ENCODE measurements at regions of chr2 and their contacts with region 1.

Region 1: DNA sequence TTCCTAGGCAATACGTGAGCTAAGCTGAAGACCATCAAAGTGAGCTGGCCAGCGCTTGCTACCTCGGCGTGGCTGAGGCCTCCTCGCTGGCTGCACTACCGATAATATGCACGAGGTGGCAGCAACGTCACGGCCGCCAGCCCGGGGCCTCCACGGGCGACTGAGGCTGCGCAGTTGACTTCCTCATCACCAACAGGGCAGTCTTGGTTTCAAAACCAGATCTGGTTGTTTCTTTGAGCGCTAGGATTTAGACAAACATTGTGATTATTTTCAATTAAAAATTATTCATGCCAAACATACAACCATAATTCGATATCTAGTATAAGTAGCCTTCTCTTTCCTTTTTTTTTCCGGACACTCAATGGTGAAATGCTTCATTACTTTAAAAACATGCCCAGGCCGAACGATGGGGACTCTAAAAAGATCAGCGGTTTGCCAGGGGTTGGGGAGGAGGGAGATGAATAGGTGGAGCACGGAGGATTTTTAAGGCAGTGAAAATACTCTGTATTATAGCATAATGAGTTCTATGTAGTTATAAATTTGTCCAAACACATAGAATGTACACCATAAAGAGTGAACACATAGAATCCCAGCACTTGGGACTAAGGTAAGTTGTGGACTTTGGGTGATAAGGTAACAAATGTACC is 52.0 kb downstream of the CYBRD1 start:
- DNase-seq: no peak
- H3K4me3 ChIP-seq: no peak overlapping the region
- CTCF ChIP-seq: peak; percentile 96

Region 2: DNA sequence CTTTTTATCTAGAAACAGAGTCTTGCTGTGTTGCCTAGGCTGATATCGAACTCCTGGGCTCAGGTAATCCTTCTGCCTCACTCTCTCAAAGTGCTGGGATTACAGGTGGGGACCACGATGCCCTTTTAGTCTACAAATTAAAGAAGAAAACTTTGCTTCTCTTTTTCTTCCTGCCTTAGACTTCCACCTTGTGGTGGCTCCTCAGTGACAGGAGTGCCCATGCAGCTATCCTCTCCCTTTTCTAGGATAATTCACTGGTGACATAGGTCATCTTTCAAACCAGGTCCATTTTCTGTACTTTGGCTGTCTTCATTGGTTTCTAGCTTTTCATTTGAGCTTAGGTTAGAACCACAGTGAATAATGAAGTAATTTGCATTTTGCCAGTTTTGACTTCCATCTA is 126.6 kb before region 1 on chr2:
- CTCF ChIA-PET with region 1: no interaction called
- POLR2A ChIA-PET with region 1: no interaction called
- DNase-seq: no peak
- H3K4me3 ChIP-seq: no peak overlapping the region
- CTCF ChIP-seq: no peak

Region 3: GRCh38 chr2:171587567-171587966 is 13.3 kb after region 1 on chr2:
- CTCF ChIA-PET with region 1: interaction called, 11 read pairs
- POLR2A ChIA-PET with region 1: no interaction called
- DNase-seq: no peak
- H3K4me3 ChIP-seq: no peak overlapping the region
- CTCF ChIP-seq: no peak

Region 4: DNA sequence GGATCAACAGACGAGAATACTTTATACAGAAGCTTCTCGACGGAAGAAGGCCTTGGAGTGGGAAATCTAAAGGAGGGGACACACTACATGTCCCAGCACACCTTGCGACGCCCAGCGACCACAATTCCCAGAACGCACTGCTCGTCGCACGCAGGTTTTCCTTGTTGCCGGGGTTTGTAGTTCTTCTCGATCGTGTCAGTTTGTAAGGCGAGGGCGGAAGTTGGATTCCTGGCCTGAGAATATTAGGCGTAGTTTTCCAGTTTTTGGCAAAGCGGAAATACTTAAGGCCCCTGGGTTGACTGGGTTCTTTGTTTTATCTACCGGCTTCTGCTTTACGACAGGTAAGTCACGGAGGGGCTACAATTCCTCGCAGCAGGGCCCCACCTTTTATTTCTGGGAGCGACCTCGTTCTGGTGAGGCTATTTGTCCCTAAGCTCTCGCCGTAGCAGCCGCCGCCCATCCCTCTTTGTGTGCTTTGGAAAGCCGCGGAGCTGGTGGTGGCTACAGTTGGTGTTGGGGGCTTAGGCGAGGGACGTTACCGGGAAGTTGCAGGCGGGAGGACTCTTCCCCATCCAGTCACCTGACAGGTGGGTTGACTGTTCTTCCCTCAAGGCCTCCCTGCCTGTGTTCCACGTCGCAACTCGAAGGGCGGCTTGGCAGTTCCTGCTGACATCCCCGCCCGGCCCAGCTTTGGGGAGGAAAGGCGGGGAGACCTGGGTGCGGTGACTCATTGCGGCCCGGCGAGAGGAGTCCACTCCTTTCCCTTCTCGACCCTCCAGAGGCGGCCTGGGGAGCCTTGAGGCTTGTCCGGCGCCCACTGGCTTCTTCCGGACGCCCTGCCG is 113.2 kb after region 1 on chr2 and contains the start of gene DYNC1I2:
- CTCF ChIA-PET with region 1: interaction called, 17 read pairs
- POLR2A ChIA-PET with region 1: interaction called, 3 read pairs
- DNase-seq: peak; percentile 79
- H3K4me3 ChIP-seq: peak within 1 kb of the TSS; percentile 86
- CTCF ChIP-seq: no peak

Region 5: DNA sequence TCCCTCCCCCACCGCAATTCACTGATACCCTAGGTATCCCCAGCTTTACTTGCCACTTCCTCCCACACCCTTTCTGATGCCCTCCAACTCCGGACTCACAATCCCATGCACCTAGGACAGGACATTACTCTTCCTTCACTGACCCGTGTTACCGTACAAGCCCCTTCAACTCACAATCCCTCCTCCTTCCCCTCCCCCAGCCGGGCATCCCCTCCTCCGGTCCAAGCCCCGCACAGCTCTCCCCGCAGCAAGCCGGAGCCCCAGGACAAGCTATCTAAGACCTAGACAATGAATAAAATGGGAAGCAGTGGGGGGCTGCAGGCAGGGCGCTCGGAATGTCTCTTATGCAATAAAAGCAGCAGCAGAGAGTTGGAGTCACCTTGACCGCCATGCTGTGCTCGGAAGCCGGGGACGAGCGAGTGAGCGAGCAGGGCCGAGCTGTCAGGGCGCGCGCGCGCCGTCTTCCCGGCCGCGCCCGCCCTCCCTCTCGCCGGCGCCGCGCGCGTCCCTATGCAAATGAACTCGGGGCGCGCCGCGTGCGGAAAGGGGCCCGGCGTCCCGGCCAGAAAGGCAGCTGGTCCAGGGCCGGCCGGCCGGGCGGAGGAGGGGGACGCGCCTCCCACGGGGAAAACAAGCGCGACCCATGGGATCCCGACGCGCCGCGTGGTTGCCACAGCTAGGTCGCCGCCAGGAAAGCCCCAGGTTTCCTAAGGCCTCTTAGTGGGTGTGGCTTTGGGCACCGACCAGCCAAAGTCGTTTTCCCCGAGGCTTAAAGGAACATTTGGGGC is 319.7 kb after region 1 on chr2 and contains the start of gene SLC25A12:
- CTCF ChIA-PET with region 1: no interaction called
- POLR2A ChIA-PET with region 1: no interaction called
- DNase-seq: no peak
- H3K4me3 ChIP-seq: peak within 1 kb of the TSS; percentile 78
- CTCF ChIP-seq: no peak

Region 6: GRCh38 chr2:172113617-172114016 is 539.3 kb after region 1 on chr2:
- CTCF ChIA-PET with region 1: interaction called, 42 read pairs
- POLR2A ChIA-PET with region 1: no interaction called
- DNase-seq: no peak
- H3K4me3 ChIP-seq: no peak overlapping the region
- CTCF ChIP-seq: peak; percentile 29